ENCODE measurements at regions of chr11 and their contacts with region 1.

Region 1: GRCh38 chr11:130653838-130654636 is 205.6 kb downstream of the ADAMTS15 start:
- DNase-seq: peak; percentile 90
- ATAC-seq: peak; percentile 95

Region 2: DNA sequence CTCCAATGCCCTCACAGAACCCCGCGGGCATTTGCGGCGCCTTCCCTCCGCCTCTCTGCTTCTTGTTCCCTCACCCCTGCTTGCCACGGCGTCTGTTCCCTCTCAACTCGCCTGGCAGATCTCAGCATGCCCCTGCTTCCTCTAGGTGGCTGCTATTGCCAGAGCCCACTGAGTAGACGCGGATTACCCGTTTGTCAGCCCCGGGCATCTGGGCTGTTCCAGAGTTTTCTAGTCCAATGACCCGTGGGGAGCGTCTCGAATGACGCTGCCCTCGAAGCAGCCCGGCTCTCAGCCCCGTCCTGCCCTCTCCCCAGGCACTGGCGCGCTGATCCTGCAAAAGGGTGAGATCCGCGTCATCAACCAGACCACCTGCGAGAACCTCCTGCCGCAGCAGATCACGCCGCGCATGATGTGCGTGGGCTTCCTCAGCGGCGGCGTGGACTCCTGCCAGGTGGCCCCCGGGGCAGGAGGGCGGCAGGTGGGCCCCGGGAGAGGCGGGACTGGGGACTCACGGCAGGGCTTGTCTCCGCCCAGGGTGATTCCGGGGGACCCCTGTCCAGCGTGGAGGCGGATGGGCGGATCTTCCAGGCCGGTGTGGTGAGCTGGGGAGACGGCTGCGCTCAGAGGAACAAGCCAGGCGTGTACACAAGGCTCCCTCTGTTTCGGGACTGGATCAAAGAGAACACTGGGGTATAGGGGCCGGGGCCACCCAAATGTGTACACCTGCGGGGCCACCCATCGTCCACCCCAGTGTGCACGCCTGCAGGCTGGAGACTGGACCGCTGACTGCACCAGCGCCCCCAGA is 444.7 kb before region 1 on chr11:
- intact Hi-C with region 1: no loop called
- DNase-seq: no peak
- ATAC-seq: no peak

Region 3: GRCh38 chr11:130478204-130478701 is 175.8 kb before region 1 on chr11:
- intact Hi-C with region 1: loop called (anchors 2 kb)
- DNase-seq: no peak
- ATAC-seq: peak; percentile 70

Region 4: GRCh38 chr11:130726234-130727037 is 72.4 kb after region 1 on chr11:
- intact Hi-C with region 1: loop called (anchors 5 kb)
- DNase-seq: no peak
- ATAC-seq: peak; percentile 90

Region 5: GRCh38 chr11:130782361-130783221 is 128.6 kb after region 1 on chr11:
- intact Hi-C with region 1: loop called (anchors 5 kb)
- DNase-seq: no peak
- ATAC-seq: peak; percentile 72

Region 6: GRCh38 chr11:130819625-130820024 is 165.6 kb after region 1 on chr11:
- intact Hi-C with region 1: no loop called
- DNase-seq: no peak
- ATAC-seq: no peak